ENCODE measurements at regions of chr9 and their contacts with region 1.

Region 1: GRCh38 chr9:18189871-18190670 is 283.9 kb upstream of the ADAMTSL1 start:
- DNase-seq: no peak
- H3K4me3 ChIP-seq: no peak overlapping the region
- H3K27ac ChIP-seq: no peak overlapping the region
- H3K4me1 ChIP-seq: no peaks in the 10 kb centered on the region
- H3K27me3 ChIP-seq: no peaks in the 10 kb centered on the region
- CTCF ChIP-seq: no peak

Region 2: GRCh38 chr9:17837965-17838364 is 352.1 kb before region 1 on chr9:
- dilution Hi-C with region 1: loop called (anchors 25 kb)
- DNase-seq: no peak
- H3K4me3 ChIP-seq: no peak overlapping the region
- H3K27ac ChIP-seq: no peak overlapping the region
- H3K4me1 ChIP-seq: no peaks in the 10 kb centered on the region
- H3K27me3 ChIP-seq: no peaks in the 10 kb centered on the region
- CTCF ChIP-seq: no peak

Region 3: GRCh38 chr9:18137815-18138214 is 52.3 kb before region 1 on chr9:
- dilution Hi-C with region 1: no loop called
- DNase-seq: no peak
- H3K4me3 ChIP-seq: no peak overlapping the region
- H3K27ac ChIP-seq: no peak overlapping the region
- H3K4me1 ChIP-seq: no peaks in the 10 kb centered on the region
- H3K27me3 ChIP-seq: no peaks in the 10 kb centered on the region
- CTCF ChIP-seq: no peak